Ovary (tissue), 10 donors: ENCODE measurements at regions of chr10 and their contacts with region 1.

Region 1: DNA sequence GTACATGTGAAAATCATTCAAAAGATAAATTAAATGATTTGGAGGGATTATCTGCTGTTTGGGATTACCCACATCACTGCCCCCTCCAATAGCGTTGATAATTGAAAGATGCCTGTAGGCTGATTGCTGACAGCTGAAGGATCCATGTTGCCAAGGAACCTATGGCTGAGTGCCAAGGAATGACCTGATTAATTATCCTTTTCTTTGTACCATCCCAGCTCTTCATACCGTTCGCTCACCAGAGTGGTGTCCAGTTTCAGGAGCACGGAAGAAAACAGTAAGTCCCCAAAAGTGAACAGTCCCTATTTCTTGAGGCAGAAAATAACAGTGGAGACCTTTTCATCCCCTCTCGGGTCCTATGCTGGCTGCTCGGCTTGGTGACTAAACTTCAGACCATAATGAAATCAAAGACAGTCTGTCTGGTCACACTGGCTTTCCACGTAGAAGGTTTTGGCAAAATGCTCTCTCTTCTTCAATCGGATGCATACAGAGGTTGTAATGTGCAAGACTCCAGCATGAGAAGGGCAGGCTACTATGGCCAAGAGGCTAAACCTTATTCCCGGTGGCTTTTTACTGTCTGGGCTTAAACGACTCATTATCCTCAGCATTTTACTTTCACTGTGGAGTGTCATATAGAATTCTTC is 108.8 kb downstream of the SPAG6 start:
- DNase-seq: no peak
- H3K4me3 ChIP-seq: no peak overlapping the region
- H3K27ac ChIP-seq: no peak overlapping the region
- H3K4me1 ChIP-seq: no peaks in the 10 kb centered on the region
- H3K27me3 ChIP-seq: no peaks in the 10 kb centered on the region
- CTCF ChIP-seq: no peak
- EP300 ChIP-seq: no peak
- POLR2A ChIP-seq: no peak

Region 2: GRCh38 chr10:22228943-22229801 is 224.9 kb before region 1 on chr10:
- intact Hi-C with region 1: loop called in 1 of 4 experiments (anchors 5 kb)
- DNase-seq: peak; percentile 86 to 93 (median 92)
- H3K4me3 ChIP-seq: peak overlapping the region; percentile 58
- H3K27ac ChIP-seq: peak overlapping the region; percentile 86 to 97
- H3K4me1 ChIP-seq: no peaks in the 10 kb centered on the region
- H3K27me3 ChIP-seq: no peaks in the 10 kb centered on the region
- CTCF ChIP-seq: peak in 1 of 3 donors; percentile 3
- EP300 ChIP-seq: no peak
- POLR2A ChIP-seq: no peak